K562 (cell line): ENCODE measurements at regions of chr9 and their contacts with region 1.

Region 1: GRCh38 chr9:114291064-114291474 is 31.8 kb upstream of the ORM1 start:
- DNase-seq: peak; percentile 63 to 81 (median 78)
- ATAC-seq: peak; percentile 87
- H3K4me3 ChIP-seq: no peak overlapping the region
- H3K27ac ChIP-seq: no peak overlapping the region
- H3K4me1 ChIP-seq: no peaks in the 10 kb centered on the region; a peak in 1 of 5 replicates
- H3K27me3 ChIP-seq: peaks cover 0 to 26% of the 10 kb centered on the region in 2 experiments; a peak in 2 of 5 replicates
- CTCF ChIP-seq: peak; percentile 86 to 89 (median 89)
- EP300 ChIP-seq: no peak
- POLR2A ChIP-seq: no peak
- RAD21 ChIP-seq: peak; percentile 85 to 87

Region 2: GRCh38 chr9:114082017-114082762 is 208.9 kb before region 1 on chr9:
- CTCF ChIA-PET with region 1: no interaction called
- POLR2A ChIA-PET with region 1: interaction called, 4 read pairs
- in situ Hi-C with region 1: loop called (anchors 10 kb)
- intact Hi-C with region 1: loop called (anchors 1 kb)
- DNase-seq: peak; percentile 79 to 85 (median 82)
- ATAC-seq: peak; percentile 95
- H3K4me3 ChIP-seq: no peak overlapping the region
- H3K27ac ChIP-seq: no peak overlapping the region
- H3K4me1 ChIP-seq: peaks cover 5 to 6% of the 10 kb centered on the region in 2 experiments; a peak in 4 of 5 replicates
- H3K27me3 ChIP-seq: peaks cover 7 to 54% of the 10 kb centered on the region in 2 experiments; a peak in 4 of 5 replicates
- CTCF ChIP-seq: peak; percentile 82 to 93 (median 89)
- EP300 ChIP-seq: no peak
- POLR2A ChIP-seq: no peak
- RAD21 ChIP-seq: peak; percentile 56 to 86

Region 3: DNA sequence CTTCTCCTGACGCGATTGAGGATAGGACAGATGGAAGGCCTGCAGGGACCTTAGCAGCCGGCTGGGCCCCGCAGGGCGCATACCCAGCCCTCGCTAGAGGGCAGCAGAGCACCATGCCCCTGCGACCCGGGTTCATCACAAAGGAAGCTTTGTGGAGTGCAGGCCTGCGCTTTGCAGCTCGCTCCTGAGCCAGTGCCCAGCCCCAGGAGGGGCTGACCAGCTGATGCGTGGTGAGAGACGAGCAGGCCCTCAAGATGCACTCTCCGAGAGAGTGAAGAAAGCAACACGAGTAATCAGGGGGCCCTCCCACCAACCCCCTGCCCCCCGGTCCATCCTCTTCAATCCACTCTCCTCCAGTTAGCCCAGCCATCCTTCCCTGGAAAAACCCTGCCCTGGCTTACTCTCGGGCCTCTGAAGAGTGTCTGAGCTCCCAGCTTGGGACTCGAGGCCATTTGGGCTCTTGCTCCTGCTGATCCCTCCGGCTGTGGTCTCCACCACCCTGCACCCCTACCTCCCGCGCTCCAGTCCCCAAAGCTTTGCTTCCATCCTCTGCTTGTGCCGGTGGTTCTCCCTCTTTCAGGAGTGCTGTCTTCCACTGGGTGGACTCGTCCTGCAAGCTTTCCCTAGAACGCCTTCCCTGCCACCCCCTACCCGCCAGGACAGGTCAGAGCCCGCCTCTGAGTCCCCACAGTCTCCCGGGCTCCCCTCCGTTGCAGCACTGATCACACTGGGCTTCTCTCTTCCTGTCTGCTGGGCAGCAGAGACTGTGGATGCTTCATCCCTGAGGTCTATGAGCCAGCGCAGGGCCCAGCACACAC is 182.8 kb before region 1 on chr9:
- CTCF ChIA-PET with region 1: interaction called, 13 read pairs
- POLR2A ChIA-PET with region 1: interaction called, 3 read pairs
- in situ Hi-C with region 1: no loop called
- intact Hi-C with region 1: loop called (anchors 1 kb)
- DNase-seq: peak; percentile 75 to 82 (median 80)
- ATAC-seq: peak; percentile 100
- H3K4me3 ChIP-seq: no peak overlapping the region
- H3K27ac ChIP-seq: no peak overlapping the region
- H3K4me1 ChIP-seq: peaks cover 0 to 4% of the 10 kb centered on the region in 2 experiments; a peak in 1 of 5 replicates
- H3K27me3 ChIP-seq: peaks cover 0 to 19% of the 10 kb centered on the region in 2 experiments; a peak in 3 of 5 replicates
- CTCF ChIP-seq: peak; percentile 89 to 95 (median 91)
- EP300 ChIP-seq: no peak
- POLR2A ChIP-seq: no peak
- RAD21 ChIP-seq: peak; percentile 70 to 87

Region 4: GRCh38 chr9:114238891-114239875 is 51.9 kb before region 1 on chr9:
- CTCF ChIA-PET with region 1: interaction called, 10 read pairs
- POLR2A ChIA-PET with region 1: no interaction called
- in situ Hi-C with region 1: no loop called
- intact Hi-C with region 1: no loop called
- DNase-seq: peak; percentile 80 to 91 (median 90)
- ATAC-seq: peak; percentile 89
- H3K4me3 ChIP-seq: no peak overlapping the region
- H3K27ac ChIP-seq: no peak overlapping the region
- H3K4me1 ChIP-seq: peaks cover 3 to 6% of the 10 kb centered on the region in 2 experiments; a peak in 2 of 5 replicates
- H3K27me3 ChIP-seq: peaks cover 19 to 43% of the 10 kb centered on the region in 2 experiments
- CTCF ChIP-seq: peak; percentile 58 to 70 (median 67)
- EP300 ChIP-seq: peak; percentile 84
- POLR2A ChIP-seq: no peak
- RAD21 ChIP-seq: peak; percentile 54 to 59